CD8-positive, alpha-beta T cell (primary cell): ENCODE measurements at regions of chr22 and their contacts with region 1.

Region 1: DNA sequence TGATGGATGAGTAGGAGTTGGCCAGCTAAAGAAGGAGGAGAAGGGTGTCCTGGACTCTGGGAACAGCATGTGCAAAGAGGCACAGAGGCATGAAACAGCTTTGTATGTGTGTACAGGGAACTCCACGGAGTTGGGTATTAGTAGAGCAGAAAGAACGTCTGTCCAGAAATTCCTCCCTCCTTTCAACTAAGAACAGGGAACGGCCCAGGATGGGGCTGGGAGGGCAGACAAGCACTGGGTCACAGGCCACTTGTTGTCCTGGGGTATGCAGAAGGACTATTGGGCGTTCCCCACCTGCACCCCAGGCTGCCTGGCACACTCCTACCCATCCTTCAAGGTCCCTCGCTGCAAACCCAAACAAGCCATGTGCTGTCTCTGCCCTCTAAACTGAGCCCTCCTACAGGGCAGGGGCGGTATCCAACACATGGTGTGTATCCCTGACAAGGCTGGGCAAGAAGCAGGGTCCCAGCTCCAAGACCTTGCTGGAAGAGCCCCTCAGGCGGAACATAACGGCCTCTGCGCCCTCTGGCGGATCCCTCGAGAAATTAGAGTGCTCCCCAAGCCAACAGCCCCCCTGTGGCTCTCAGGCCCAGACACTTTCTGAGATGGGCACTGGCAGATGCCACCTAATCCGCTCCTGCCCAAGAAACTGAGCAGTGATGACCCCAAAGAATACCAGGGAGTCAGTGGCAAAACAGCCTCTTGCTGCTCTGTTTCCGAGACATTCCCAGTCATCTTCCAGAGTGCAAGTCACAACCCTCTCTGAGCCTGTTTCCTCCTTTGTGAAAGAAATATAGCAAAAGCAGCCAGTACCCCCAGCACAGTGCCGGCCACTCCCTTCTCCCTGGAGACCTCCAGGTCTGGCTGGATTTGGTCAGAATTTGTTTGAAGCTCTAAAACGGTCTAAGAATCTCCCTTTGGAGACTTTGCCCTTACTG is 1.6 kb upstream of the ELFN2 start:
- DNase-seq: peak; percentile 30 to 80 (median 65)
- ATAC-seq: peak; percentile 62
- H3K4me3 ChIP-seq: no peak overlapping the region
- H3K4me3 Mint-ChIP-seq: peak overlapping the region; percentile 22
- H3K27ac ChIP-seq: no peak overlapping the region
- H3K27ac Mint-ChIP-seq: no peak overlapping the region
- H3K4me1 ChIP-seq: peaks cover 17% of the 10 kb centered on the region
- H3K4me1 Mint-ChIP-seq: peaks cover 22% of the 10 kb centered on the region
- H3K27me3 ChIP-seq: peaks cover 17 to 25% of the 10 kb centered on the region in 2 experiments
- H3K27me3 Mint-ChIP-seq: peaks cover 54% of the 10 kb centered on the region
- CTCF ChIP-seq: peak; percentile 54

Region 2: DNA sequence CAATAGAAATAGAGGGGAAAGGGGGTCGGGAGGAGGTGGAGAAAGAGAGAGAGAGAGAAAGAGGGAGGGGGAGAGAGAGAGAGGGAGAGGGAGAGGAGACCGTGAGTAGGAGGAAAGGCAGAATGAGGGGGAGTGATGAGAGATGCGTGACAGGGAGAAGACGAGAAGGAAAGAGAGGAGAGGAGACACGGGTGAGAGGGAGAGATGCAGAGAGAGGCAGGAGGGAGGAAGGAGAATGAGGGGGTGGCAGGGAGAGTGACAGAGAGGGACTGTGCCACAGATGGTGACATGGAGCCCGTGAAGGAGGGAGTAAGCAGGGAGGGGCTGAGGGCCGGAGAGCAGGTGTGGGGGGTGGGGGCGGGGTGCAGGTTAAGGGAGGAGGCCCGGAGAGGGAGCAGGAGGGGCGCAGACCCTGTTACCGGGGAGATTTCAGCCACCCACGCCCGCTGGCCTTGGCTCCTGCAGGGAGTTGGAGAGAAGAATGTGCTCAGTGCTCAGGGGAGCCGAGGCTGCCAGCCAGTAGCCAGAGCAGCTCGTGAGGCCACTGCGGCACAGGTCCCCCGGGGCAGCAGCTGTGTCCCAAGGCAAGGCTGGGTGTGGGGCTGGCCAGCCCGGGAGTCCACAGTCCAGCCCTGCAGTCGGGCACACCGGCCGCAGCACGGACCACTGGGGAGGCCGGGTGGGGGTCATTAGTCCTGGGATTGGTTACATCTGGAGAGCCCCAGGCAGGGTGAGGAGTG is 216.6 kb before region 1 on chr22 and contains the start of gene SSTR3:
- CTCF ChIA-PET with region 1: no interaction called
- POLR2A ChIA-PET with region 1: no interaction called
- intact Hi-C with region 1: no loop called
- DNase-seq: peak in 2 of 9 experiments; percentile 1 to 10
- ATAC-seq: no peak
- H3K4me3 ChIP-seq: no peak within 1 kb of the TSS
- H3K4me3 Mint-ChIP-seq: no peak within 1 kb of the TSS
- H3K27ac ChIP-seq: no peak within 1 kb of the TSS
- H3K27ac Mint-ChIP-seq: no peak within 1 kb of the TSS
- H3K4me1 ChIP-seq: peaks cover 58% of the 10 kb centered on the region
- H3K4me1 Mint-ChIP-seq: peaks cover 73% of the 10 kb centered on the region
- H3K27me3 ChIP-seq: no peaks in the 10 kb centered on the region
- H3K27me3 Mint-ChIP-seq: no peaks in the 10 kb centered on the region
- CTCF ChIP-seq: no peak
- total RNA-seq, gene SSTR3: 2.6 to 3.1 TPM

Region 3: GRCh38 chr22:37334859-37335805 is 93.8 kb before region 1 on chr22:
- CTCF ChIA-PET with region 1: interaction called, 12 read pairs
- POLR2A ChIA-PET with region 1: no interaction called
- intact Hi-C with region 1: no loop called
- DNase-seq: no peak
- ATAC-seq: no peak
- H3K4me3 ChIP-seq: no peak overlapping the region
- H3K4me3 Mint-ChIP-seq: no peak overlapping the region
- H3K27ac ChIP-seq: no peak overlapping the region
- H3K27ac Mint-ChIP-seq: no peak overlapping the region
- H3K4me1 ChIP-seq: peaks cover 5% of the 10 kb centered on the region
- H3K4me1 Mint-ChIP-seq: peaks cover 8% of the 10 kb centered on the region
- H3K27me3 ChIP-seq: peaks cover 22 to 23% of the 10 kb centered on the region in 2 experiments
- H3K27me3 Mint-ChIP-seq: peaks cover 49% of the 10 kb centered on the region
- CTCF ChIP-seq: no peak

Region 4: DNA sequence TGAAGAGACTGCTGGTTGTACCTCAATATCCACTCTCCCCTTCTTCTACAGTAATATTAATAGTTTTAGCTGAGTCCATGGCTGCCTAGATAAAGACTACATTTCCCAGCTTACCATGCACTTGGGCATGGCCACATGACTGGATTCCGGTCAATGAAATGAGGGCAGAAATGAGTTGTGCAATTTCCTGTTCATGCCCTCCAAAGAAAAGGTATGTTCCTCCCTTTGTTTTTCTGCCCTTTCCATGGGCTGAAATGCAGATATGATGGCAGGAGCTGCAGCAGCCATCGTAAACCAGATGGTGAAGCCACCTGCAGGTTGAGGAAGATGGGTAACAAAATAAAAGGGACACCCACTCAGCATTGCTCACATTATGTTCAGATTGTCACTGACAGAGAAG is 13.6 kb after region 1 on chr22:
- CTCF ChIA-PET with region 1: interaction called, 15 read pairs
- POLR2A ChIA-PET with region 1: no interaction called
- intact Hi-C with region 1: no loop called
- DNase-seq: no peak
- ATAC-seq: no peak
- H3K4me3 ChIP-seq: no peak overlapping the region
- H3K4me3 Mint-ChIP-seq: no peak overlapping the region
- H3K27ac ChIP-seq: no peak overlapping the region
- H3K27ac Mint-ChIP-seq: no peak overlapping the region
- H3K4me1 ChIP-seq: no peaks in the 10 kb centered on the region
- H3K4me1 Mint-ChIP-seq: no peaks in the 10 kb centered on the region
- H3K27me3 ChIP-seq: no peaks in the 10 kb centered on the region
- H3K27me3 Mint-ChIP-seq: no peaks in the 10 kb centered on the region
- CTCF ChIP-seq: no peak